MCF 10A (cell line): ENCODE measurements at regions of chr6 and their contacts with region 1.

Region 1: DNA sequence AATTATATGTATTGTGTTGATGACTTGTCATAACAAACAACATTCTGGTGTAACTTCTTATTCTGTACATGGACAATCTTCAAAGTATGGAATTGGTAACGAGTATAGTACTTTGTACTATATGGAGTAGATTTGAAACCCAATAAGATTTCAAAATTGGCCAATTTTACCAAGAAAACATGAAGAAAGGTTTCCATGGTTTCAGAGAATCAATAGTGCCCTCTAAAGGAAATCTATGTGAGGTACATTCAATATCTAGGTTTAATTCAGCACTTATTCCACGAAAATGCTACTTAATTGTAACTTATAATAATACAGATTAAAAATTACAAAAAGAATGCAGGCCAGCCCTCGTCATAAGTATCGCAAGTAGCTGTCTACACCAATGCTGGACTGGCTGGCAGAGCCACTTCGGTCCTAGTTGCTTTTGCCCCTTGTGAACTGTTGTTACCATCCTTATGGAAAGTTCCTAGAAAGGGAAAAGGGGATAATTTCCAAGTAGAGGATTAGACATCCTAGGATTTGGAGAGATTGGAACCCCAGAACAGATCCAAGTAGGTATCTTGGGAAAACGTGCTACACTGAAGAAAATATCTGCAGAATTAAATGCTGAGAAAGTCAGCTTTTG is 70.9 kb downstream of the LCA5 start:
- DNase-seq: peak; percentile 48
- H3K4me3 Mint-ChIP-seq: no peak overlapping the region
- H3K27ac Mint-ChIP-seq: no peak overlapping the region
- H3K4me1 Mint-ChIP-seq: peaks cover 19% of the 10 kb centered on the region
- H3K27me3 Mint-ChIP-seq: no peaks in the 10 kb centered on the region
- CTCF ChIP-seq: peak; percentile 56

Region 2: DNA sequence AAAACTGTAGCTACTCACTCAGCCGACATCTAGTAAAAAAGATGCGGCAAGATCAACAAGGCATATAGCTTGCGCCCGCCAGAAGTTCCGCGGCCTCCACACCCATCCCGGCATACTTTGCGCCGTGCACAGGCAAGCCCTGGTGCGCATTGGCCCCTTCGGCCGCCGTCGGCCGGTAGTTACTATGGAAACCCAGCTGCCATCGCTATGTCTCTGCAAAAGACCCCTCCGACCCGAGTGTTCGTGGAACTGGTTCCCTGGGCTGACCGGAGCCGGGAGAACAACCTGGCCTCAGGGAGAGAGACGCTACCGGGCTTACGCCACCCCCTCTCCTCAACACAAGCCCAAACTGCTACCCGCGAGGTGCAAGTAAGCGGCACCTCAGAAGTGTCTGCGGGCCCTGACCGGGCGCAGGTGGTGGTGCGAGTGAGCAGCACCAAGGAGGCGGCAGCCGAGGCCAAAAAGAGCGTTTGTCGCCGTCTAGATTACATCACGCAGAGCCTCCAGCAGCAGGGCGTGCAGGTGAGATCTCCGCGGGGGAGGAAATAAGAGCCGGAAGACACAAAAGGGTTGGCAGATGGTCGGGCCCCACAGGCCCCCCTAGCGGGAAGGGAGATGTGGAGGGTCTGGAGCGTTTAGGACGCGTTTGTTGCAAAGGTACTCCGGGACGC is 598.8 kb before region 1 on chr6 and contains the start of gene IRAK1BP1:
- CTCF ChIA-PET with region 1: no interaction called
- POLR2A ChIA-PET with region 1: no interaction called
- intact Hi-C with region 1: loop called (anchors 1 kb)
- DNase-seq: peak; percentile 81
- H3K4me3 Mint-ChIP-seq: peak within 1 kb of the TSS; percentile 100
- H3K27ac Mint-ChIP-seq: peak within 1 kb of the TSS; percentile 94
- H3K4me1 Mint-ChIP-seq: no peaks in the 10 kb centered on the region
- H3K27me3 Mint-ChIP-seq: no peaks in the 10 kb centered on the region
- CTCF ChIP-seq: no peak
- total RNA-seq, gene IRAK1BP1: 4.6 and 6.6 TPM in 2 replicates

Region 3: GRCh38 chr6:79201147-79201546 is 265.2 kb before region 1 on chr6:
- CTCF ChIA-PET with region 1: interaction called, 6 read pairs
- POLR2A ChIA-PET with region 1: no interaction called
- intact Hi-C with region 1: loop called (anchors 5 kb)
- DNase-seq: no peak
- H3K4me3 Mint-ChIP-seq: no peak overlapping the region
- H3K27ac Mint-ChIP-seq: no peak overlapping the region
- H3K4me1 Mint-ChIP-seq: peaks cover 7% of the 10 kb centered on the region
- H3K27me3 Mint-ChIP-seq: no peaks in the 10 kb centered on the region
- CTCF ChIP-seq: no peak

Region 4: DNA sequence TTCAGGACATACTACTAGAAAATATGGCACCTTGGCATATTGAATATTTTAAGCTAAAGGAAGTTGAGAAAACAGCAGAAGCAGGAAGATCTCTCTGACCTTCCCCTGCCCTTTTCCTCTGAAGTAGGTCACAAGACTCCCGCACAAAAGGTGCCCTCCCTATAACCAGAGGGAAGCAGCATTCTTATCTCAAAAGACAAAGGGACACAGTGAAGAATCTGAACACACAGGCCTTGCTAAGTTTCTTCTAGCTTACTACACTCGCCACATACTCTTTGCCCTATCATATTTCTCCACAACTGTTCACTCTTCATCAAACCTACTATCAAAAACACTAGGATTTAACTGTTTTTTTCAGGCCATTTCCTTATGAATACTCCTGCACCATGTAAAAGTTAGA is 329.9 kb after region 1 on chr6:
- CTCF ChIA-PET with region 1: no interaction called
- POLR2A ChIA-PET with region 1: no interaction called
- intact Hi-C with region 1: no loop called
- DNase-seq: no peak
- H3K4me3 Mint-ChIP-seq: no peak overlapping the region
- H3K27ac Mint-ChIP-seq: no peak overlapping the region
- H3K4me1 Mint-ChIP-seq: no peaks in the 10 kb centered on the region
- H3K27me3 Mint-ChIP-seq: no peaks in the 10 kb centered on the region
- CTCF ChIP-seq: no peak